ENCODE measurements at regions of chr17 and their contacts with region 1.

Region 1: DNA sequence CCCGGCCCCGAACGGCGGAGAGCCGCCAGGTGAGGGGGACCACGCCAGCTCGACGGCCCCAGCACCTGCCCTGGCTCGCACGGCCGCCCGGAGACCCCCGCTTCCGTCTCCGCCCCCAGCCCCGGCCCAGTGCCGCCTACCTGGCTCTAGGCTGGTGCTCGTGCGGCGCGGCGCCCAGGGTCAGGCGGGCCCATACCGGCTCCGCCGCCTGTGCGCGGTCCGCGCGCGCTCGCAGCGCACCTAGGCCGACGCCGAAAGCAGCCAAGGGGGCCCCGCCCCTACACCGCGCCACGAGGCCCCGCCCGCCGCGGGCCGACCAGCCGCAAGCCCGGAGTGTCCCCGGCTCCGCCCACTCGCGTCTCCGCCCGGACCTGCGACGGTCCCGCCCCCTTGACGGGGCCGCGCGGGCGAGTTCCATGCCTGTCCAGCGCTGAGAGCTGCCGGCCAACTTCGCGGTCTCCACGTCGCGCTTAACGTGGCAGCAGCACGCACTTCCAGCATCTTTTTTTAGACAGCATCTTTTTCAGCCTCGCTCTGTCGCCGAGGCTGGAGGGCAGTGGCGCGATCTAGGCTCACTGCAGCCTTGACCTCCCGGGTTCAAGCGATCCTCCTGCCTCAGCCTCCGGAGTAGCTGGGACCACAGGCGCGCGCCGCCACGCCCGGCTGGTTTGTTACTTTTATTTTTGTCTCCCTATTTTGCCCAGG is at the start of gene SLC25A39:
- DNase-seq: peak; percentile 96
- H3K4me3 ChIP-seq: peak within 1 kb of the TSS; percentile 67 to 97 (median 83)
- H3K27ac ChIP-seq: peak within 1 kb of the TSS; percentile 93 to 98 (median 96)
- H3K4me1 ChIP-seq: peaks cover 8 to 30% (median 25%) of the 10 kb centered on the region in 4 donors
- H3K27me3 ChIP-seq: no peaks in the 10 kb centered on the region
- CTCF ChIP-seq: no peak
- EP300 ChIP-seq: no peak
- POLR2A ChIP-seq: peak; percentile 63
- total RNA-seq, gene SLC25A39: 136 to 154 (median 141) TPM

Region 2: GRCh38 chr17:44218344-44219107 is 106.2 kb before region 1 on chr17:
- in situ Hi-C with region 1: loop called in 1 of 4 experiments (anchors 10 kb)
- intact Hi-C with region 1: loop called (anchors 2 kb)
- DNase-seq: peak; percentile 92
- H3K4me3 ChIP-seq: peak overlapping the region; percentile 84 to 98 (median 98)
- H3K27ac ChIP-seq: peak overlapping the region; percentile 99 to 100 (median 100)
- H3K4me1 ChIP-seq: peaks cover 27 to 37% (median 31%) of the 10 kb centered on the region in 4 donors
- H3K27me3 ChIP-seq: no peaks in the 10 kb centered on the region
- CTCF ChIP-seq: peak; percentile 43 to 70 (median 62)
- EP300 ChIP-seq: no peak
- POLR2A ChIP-seq: no peak

Region 3: DNA sequence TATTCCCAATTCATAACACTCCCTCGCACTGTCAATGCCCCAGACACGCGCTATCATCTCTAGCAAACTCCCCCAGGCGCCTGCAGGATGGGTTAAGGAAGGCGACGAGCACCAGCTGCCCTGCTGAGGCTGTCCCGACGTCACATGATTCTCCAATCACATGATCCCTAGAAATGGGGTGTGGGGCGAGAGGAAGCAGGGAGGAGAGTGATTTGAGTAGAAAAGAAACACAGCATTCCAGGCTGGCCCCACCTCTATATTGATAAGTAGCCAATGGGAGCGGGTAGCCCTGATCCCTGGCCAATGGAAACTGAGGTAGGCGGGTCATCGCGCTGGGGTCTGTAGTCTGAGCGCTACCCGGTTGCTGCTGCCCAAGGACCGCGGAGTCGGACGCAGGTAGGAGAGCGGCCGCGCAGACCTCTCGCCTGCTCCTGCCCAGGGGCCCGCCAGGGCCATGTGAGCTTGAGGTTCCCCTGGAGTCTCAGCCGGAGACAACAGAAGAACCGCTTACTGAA is 20.3 kb after region 1 on chr17 and contains the start of gene GRN:
- in situ Hi-C with region 1: no loop called
- intact Hi-C with region 1: loop called (anchors 1 kb)
- DNase-seq: peak; percentile 95
- H3K4me3 ChIP-seq: peak within 1 kb of the TSS; percentile 57 to 98 (median 86)
- H3K27ac ChIP-seq: peak within 1 kb of the TSS; percentile 89 to 97 (median 94)
- H3K4me1 ChIP-seq: peaks cover 7 to 24% (median 18%) of the 10 kb centered on the region in 4 donors
- H3K27me3 ChIP-seq: no peaks in the 10 kb centered on the region
- CTCF ChIP-seq: no peak
- EP300 ChIP-seq: no peak
- POLR2A ChIP-seq: peak; percentile 91
- total RNA-seq, gene GRN: 546 to 1,119 (median 694) TPM

Region 4: GRCh38 chr17:44451832-44452231 is 127.1 kb after region 1 on chr17:
- in situ Hi-C with region 1: no loop called
- intact Hi-C with region 1: no loop called
- DNase-seq: no peak
- H3K4me3 ChIP-seq: no peak overlapping the region
- H3K27ac ChIP-seq: no peak overlapping the region
- H3K4me1 ChIP-seq: no peaks in the 10 kb centered on the region
- H3K27me3 ChIP-seq: no peaks in the 10 kb centered on the region
- CTCF ChIP-seq: no peak
- EP300 ChIP-seq: no peak
- POLR2A ChIP-seq: no peak